ENCODE measurements at regions of chr12 and their contacts with region 1.

Region 1: DNA sequence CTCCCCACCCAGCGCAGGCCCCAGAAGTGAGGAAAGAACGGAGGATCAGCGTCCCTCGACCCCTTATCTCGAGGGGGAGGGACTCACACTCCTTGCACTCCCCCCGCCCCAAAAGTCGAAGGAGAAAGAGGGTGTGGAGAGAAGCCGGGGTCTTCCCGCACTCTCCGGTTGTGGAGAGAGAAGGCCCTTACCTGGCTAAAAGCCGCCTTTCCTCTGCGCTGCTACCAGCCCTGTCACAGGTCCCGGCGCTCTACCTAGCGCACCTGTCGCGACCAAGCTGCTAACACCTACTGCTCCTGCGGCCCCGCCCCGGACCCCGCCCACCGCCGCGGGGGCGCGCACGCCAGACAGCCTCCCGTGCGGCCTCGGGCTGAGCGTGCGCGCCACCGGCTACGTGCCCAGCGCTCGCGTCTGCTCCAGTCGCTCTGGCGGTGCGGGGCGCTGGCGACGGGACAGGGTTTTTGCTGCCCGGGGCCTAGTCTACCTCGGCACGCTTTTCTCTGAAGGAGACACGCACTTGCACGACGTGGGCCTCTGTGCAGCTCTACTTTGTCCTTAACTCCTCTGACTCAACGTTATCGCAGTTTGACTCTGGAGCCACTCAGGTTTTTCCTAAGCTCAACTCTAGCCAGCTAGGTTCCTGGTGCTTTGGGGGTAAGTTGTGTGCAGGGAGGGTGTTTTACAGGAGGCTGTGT is at the start of gene LIMA1:
- DNase-seq: peak; percentile 87
- H3K4me3 ChIP-seq: peak within 1 kb of the TSS; percentile 67 to 92 (median 80)
- H3K27ac ChIP-seq: peak within 1 kb of the TSS; percentile 50
- H3K4me1 ChIP-seq: peaks cover 16% of the 10 kb centered on the region
- H3K27me3 ChIP-seq: no peaks in the 10 kb centered on the region
- CTCF ChIP-seq: peak; percentile 8 to 53
- total RNA-seq, gene LIMA1: 398 to 425 TPM

Region 2: GRCh38 chr12:50201978-50202521 is 81.3 kb before region 1 on chr12:
- CTCF ChIA-PET with region 1: no interaction called
- dilution Hi-C with region 1: loop called (anchors 5 kb)
- in situ Hi-C with region 1: no loop called
- intact Hi-C with region 1: no loop called
- DNase-seq: peak; percentile 93
- H3K4me3 ChIP-seq: no peak overlapping the region
- H3K27ac ChIP-seq: peak overlapping the region; percentile 80
- H3K4me1 ChIP-seq: peaks cover 53% of the 10 kb centered on the region
- H3K27me3 ChIP-seq: no peaks in the 10 kb centered on the region
- CTCF ChIP-seq: no peak

Region 3: DNA sequence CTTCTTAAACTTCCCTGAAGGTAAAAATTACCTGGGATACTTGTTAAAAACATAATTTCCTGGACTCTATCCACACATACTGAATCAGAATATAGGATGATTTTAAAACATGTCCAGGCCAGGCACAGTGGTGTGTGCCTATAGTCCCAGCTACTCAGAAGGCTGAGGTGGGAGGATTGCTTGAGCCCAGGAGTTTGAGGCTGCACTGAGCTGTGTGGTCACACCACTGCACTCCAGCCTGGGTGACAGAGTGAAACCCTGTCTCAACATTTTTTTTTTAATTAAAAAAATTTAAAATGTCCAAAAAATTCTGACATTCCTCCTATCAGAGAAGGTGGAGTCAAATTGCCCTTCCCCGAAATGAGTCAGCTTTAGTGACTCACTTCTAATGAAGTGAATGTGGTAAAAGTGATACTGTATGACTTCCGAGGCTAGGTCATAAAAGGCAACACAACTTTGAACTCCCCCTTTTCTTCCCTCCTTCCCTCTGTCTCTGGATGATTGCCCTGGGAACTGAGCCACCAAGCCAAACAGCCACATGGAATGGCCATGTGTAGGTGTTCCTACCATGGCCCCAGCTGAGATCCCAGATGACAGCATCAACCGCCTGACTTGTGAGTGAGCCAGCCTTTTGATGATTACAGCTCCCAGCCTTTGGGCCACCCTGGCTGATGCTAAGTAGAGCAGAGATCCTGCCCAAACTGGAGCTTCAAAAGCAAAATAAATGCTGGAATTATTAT is 36.3 kb before region 1 on chr12:
- CTCF ChIA-PET with region 1: interaction called, 4 read pairs
- dilution Hi-C with region 1: no loop called
- in situ Hi-C with region 1: no loop called
- intact Hi-C with region 1: loop called (anchors 1 kb)
- DNase-seq: peak; percentile 99
- H3K4me3 ChIP-seq: no peak overlapping the region
- H3K27ac ChIP-seq: peak overlapping the region; percentile 99
- H3K4me1 ChIP-seq: peaks cover 32% of the 10 kb centered on the region
- H3K27me3 ChIP-seq: no peaks in the 10 kb centered on the region
- CTCF ChIP-seq: no peak